Heart left ventricle (tissue), 16 donors: ENCODE measurements at regions of chr2 and their contacts with region 1.

Region 1: DNA sequence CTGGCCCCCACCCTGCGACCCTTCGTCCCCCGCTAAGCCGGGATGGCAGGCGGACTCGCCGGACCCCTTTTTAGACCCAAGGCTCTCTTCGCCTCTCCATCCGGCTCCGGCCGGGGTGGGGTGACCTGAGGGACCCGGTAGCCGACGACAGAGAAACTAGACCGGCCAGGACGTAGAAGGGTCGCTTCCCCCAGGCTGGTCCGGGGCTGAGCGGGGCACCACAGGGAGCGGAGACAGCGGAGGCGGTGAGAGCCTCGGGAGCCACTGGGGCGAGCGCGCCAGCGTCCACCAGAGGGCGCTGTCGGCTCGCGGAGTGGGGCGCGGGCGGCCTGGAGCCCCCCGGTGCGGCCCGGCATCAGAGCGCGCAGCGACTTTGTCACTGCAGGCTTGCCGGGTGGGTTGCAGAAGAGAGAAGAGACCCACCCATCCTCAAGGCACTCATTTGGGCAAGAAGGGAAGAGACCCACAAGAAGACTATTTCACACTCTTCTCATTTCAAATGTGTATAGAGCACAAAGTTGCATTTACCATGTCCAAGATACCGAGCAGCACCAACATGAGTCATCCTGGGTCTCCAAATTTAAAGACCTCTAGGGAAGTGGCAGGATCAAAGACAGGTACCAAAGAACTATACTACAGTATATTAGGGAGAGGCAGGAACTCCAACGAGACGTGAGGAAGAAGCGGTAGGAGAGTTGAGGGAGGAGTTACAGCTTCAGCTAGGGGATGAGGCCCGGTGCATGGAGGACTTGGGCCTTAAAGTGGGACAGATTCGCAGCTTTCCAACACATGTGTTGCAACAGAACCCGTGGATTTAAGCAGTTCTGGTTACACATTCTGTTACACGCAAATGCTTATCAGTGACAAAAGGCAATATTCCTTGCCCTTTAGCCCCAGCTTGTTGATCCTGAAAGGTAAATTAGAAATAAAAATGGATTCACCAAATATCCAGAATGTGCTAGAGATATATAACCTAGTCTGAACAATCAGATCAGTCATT is 7.6 kb upstream of the PRKCE start:
- DNase-seq: peak; percentile 64 to 87 (median 71)
- ATAC-seq: peak; percentile 64 to 97 (median 95)
- H3K4me3 ChIP-seq: peak overlapping the region; percentile 32 to 65 (median 56)
- H3K27ac ChIP-seq: peak overlapping the region in 1 of 12 donors; percentile 46
- H3K4me1 ChIP-seq: peaks cover 0 to 20% (median 11%) of the 10 kb centered on the region in 12 donors
- H3K27me3 ChIP-seq: peaks cover 0 to 8% (median 0%) of the 10 kb centered on the region in 9 donors
- CTCF ChIP-seq: peak; percentile 93 to 99 (median 98)
- POLR2A ChIP-seq: no peak

Region 2: DNA sequence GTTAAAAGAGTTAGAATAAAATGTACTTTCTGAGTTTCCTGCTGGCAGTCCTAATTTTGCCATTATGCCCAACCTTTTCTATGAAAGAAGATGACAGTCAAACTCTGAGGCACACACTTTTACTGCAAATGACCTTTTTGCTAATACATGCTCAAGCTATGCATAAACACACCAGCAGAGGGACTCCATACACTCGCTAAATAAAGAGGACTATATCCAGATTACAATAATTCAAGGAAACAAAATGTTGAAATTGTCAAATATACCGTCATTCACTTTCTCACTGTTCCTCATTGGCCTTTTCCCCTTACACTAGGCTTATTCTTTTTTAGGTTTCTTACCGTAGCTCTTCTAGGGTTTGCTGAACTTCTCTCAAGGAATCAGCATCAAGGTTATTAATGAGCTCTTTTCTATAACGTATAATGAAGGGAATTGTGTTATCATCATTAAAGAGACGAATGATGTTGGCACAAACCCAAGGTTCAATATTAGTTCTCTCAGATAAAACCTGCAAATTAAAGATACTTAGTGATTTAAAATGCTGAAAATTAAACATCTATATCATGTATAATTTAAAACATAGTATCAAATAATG is 58.5 kb before region 1 on chr2:
- intact Hi-C with region 1: loop called in 1 of 10 experiments (anchors 2 kb)
- DNase-seq: no peak
- ATAC-seq: peak in 3 of 4 donors; percentile 58 to 70 (median 65)
- H3K4me3 ChIP-seq: peak overlapping the region in 1 of 12 donors; percentile 13
- H3K27ac ChIP-seq: no peak overlapping the region
- H3K4me1 ChIP-seq: peaks cover 0 to 23% (median 0%) of the 10 kb centered on the region in 12 donors
- H3K27me3 ChIP-seq: no peaks in the 10 kb centered on the region
- CTCF ChIP-seq: peak; percentile 43 to 76 (median 66)
- POLR2A ChIP-seq: no peak

Region 3: GRCh38 chr2:45699032-45699658 is 55.3 kb after region 1 on chr2:
- intact Hi-C with region 1: no loop called
- DNase-seq: no peak
- ATAC-seq: peak in 1 of 4 donors; percentile 64
- H3K4me3 ChIP-seq: no peak overlapping the region
- H3K27ac ChIP-seq: peak overlapping the region in 2 of 12 donors; percentile 18 to 44
- H3K4me1 ChIP-seq: peaks cover 0 to 52% (median 28%) of the 10 kb centered on the region in 12 donors
- H3K27me3 ChIP-seq: no peaks in the 10 kb centered on the region
- CTCF ChIP-seq: no peak
- POLR2A ChIP-seq: no peak

Region 4: GRCh38 chr2:45778720-45779171 is 134.9 kb after region 1 on chr2:
- intact Hi-C with region 1: loop called (anchors 1 to 5 kb)
- DNase-seq: peak in 4 of 5 donors; percentile 44 to 72 (median 65)
- ATAC-seq: peak; percentile 50 to 64 (median 58)
- H3K4me3 ChIP-seq: no peak overlapping the region
- H3K27ac ChIP-seq: no peak overlapping the region
- H3K4me1 ChIP-seq: peaks cover 0 to 48% (median 24%) of the 10 kb centered on the region in 12 donors
- H3K27me3 ChIP-seq: no peaks in the 10 kb centered on the region
- CTCF ChIP-seq: peak; percentile 69 to 88 (median 80)
- POLR2A ChIP-seq: no peak

Region 5: DNA sequence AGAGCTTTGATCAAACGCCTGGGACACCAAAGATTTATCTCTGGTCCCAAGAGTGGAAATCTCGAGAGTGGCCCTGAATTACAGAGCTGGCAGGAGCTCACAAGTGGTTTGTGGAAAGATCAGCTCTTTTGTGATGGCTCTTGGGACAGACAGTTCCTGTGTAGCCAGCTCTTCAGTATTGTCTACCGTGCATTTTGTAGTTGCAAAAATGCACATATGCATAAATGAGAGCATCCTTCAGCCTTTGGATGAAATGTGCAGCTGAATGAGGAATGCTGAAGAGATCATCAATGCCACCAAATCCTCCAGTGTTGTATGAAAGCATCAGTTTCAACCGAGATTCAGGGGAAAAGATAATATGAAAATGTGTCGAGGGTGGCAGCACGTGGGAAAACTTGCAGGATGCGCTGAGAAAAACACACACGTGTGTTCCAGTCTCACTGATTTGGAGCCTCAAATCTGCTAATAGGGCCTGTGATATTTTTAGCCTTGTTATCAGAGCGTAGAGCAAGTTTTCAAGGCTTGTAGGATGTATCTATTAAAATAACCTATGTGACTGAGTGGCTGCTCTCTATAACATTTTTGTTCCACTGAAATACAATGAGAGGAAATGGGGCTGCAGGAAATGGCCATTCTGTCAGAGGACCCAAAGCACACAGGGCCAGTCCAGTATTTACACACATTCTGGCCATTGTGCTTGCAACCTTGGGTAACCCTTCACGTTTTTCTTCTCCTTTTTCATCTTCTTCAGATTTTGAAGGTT is 146.3 kb after region 1 on chr2:
- intact Hi-C with region 1: no loop called
- DNase-seq: no peak
- ATAC-seq: peak; percentile 32 to 74 (median 57)
- H3K4me3 ChIP-seq: no peak overlapping the region
- H3K27ac ChIP-seq: peak overlapping the region; percentile 25 to 79 (median 59)
- H3K4me1 ChIP-seq: peaks cover 0 to 60% (median 42%) of the 10 kb centered on the region in 12 donors
- H3K27me3 ChIP-seq: no peaks in the 10 kb centered on the region
- CTCF ChIP-seq: no peak
- POLR2A ChIP-seq: no peak

Region 6: GRCh38 chr2:45851613-45852304 is 207.9 kb after region 1 on chr2:
- intact Hi-C with region 1: loop called in 1 of 10 experiments (anchors 10 kb)
- DNase-seq: peak in 1 of 5 donors; percentile 49
- ATAC-seq: peak in 3 of 4 donors; percentile 20 to 66 (median 65)
- H3K4me3 ChIP-seq: no peak overlapping the region
- H3K27ac ChIP-seq: no peak overlapping the region
- H3K4me1 ChIP-seq: peaks cover 0 to 40% (median 12%) of the 10 kb centered on the region in 12 donors
- H3K27me3 ChIP-seq: no peaks in the 10 kb centered on the region
- CTCF ChIP-seq: no peak
- POLR2A ChIP-seq: no peak

Region 7: GRCh38 chr2:45860136-45861121 is 216.6 kb after region 1 on chr2:
- intact Hi-C with region 1: loop called in 2 of 10 experiments (anchors 10 kb)
- DNase-seq: peak; percentile 53 to 81 (median 64)
- ATAC-seq: peak; percentile 42 to 79 (median 66)
- H3K4me3 ChIP-seq: peak overlapping the region in 9 of 12 donors; percentile 22 to 50 (median 34)
- H3K27ac ChIP-seq: peak overlapping the region in 11 of 12 donors; percentile 41 to 73 (median 48)
- H3K4me1 ChIP-seq: peaks cover 4 to 61% (median 28%) of the 10 kb centered on the region in 12 donors
- H3K27me3 ChIP-seq: no peaks in the 10 kb centered on the region
- CTCF ChIP-seq: peak in 7 of 12 donors; percentile 8 to 35 (median 22)
- POLR2A ChIP-seq: no peak